Heart right ventricle (tissue), 16 donors: ENCODE measurements at regions of chr5 and their contacts with region 1.

Region 1: DNA sequence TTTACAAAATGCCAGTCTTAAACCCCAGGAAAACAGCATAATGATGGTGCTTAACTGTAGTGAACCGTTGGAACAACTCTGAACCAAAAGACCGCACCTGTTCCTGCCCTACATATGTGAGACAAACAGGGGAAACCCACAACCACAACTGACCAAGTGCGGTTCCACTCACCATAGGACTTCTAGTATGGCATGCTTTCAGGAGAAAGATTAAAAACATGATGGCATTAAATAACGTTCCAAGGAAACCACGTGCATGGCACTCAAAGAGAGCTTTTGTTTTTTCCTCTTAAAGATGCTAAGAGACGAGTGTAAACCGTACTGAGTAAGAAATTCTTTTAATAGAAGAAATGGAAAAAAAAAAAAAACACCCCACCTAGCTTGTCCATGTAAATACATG is 119.8 kb downstream of the SSBP2 start:
- DNase-seq: no peak
- ATAC-seq: no peak
- H3K4me3 ChIP-seq: no peak overlapping the region
- H3K27ac ChIP-seq: no peak overlapping the region
- H3K4me1 ChIP-seq: peaks cover 0 to 14% (median 11%) of the 10 kb centered on the region in 9 donors
- H3K27me3 ChIP-seq: no peaks in the 10 kb centered on the region
- CTCF ChIP-seq: no peak

Region 2: DNA sequence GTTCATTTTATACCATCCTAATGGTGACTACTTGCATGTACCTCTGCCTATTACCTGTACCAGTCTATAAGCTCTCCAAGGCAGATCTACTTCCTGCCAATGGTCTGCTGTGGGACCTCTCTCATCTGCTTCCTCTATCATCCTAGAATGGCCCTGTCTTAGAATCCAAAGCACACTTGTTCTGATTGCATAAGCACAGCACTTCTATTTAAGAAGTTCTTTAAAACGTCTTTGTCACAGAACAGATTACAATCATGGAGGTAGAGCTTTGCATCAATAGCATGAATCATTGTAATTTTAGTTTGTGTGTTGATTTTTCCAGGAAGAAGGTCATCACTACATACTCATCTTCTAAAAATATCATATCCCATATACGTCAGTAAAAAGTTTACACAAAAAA is 105.4 kb before region 1 on chr5:
- intact Hi-C with region 1: loop called in 1 of 10 experiments (anchors 10 kb)
- DNase-seq: no peak
- ATAC-seq: peak in 1 of 8 donors; percentile 17
- H3K4me3 ChIP-seq: no peak overlapping the region
- H3K27ac ChIP-seq: no peak overlapping the region
- H3K4me1 ChIP-seq: peaks cover 0 to 28% (median 13%) of the 10 kb centered on the region in 9 donors
- H3K27me3 ChIP-seq: no peaks in the 10 kb centered on the region
- CTCF ChIP-seq: no peak